HCT116 (cell line): ENCODE measurements at regions of chr2 and their contacts with region 1.

Region 1: DNA sequence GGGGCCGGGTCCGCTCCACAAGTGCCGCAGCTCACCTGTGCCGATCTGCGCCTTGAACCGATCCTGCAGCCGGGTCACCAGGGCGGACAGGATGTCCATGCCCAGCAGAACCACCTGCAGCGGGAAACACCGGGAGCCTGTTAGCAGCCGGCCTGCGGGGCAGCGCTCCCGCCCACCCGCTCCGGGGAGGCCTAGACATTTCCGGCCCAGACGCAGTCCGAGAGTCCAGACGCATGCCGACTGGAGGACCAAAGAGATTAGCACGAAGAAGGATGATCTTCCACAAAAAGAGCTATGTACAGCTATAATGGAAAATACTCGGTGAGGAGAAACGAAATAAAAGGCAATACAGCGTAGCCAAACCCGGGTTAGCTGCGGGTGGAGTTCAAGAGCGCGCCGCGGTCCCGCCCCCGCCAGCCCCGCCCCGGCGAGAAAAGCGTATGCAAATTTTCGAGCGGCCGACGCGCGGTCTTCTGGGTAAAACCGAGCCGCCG is 421 bp upstream of the RNU4ATAC start:
- DNase-seq: peak; percentile 72
- ATAC-seq: peak; percentile 77
- H3K4me3 ChIP-seq: peak overlapping the region; percentile 66 to 70
- H3K27ac ChIP-seq: peak overlapping the region; percentile 77
- H3K4me1 ChIP-seq: peaks cover 15 to 31% of the 10 kb centered on the region in 2 experiments
- H3K27me3 ChIP-seq: no peaks in the 10 kb centered on the region
- CTCF ChIP-seq: no peak
- POLR2A ChIP-seq: no peak
- RAD21 ChIP-seq: no peak

Region 2: GRCh38 chr2:121128754-121129659 is 401.3 kb before region 1 on chr2:
- CTCF ChIA-PET with region 1: interaction called, 8 read pairs
- POLR2A ChIA-PET with region 1: interaction called, 15 read pairs
- RAD21 ChIA-PET with region 1: no interaction called
- intact Hi-C with region 1: no loop called
- DNase-seq: peak; percentile 48
- ATAC-seq: peak; percentile 91
- H3K4me3 ChIP-seq: no peak overlapping the region
- H3K27ac ChIP-seq: no peak overlapping the region
- H3K4me1 ChIP-seq: peaks cover 0 to 5% of the 10 kb centered on the region in 2 experiments; a peak in 3 of 4 replicates
- H3K27me3 ChIP-seq: no peaks in the 10 kb centered on the region; the same call in 1 of the 2 replicates
- CTCF ChIP-seq: peak; percentile 79 to 93 (median 90)
- POLR2A ChIP-seq: no peak
- RAD21 ChIP-seq: peak; percentile 86

Region 3: DNA sequence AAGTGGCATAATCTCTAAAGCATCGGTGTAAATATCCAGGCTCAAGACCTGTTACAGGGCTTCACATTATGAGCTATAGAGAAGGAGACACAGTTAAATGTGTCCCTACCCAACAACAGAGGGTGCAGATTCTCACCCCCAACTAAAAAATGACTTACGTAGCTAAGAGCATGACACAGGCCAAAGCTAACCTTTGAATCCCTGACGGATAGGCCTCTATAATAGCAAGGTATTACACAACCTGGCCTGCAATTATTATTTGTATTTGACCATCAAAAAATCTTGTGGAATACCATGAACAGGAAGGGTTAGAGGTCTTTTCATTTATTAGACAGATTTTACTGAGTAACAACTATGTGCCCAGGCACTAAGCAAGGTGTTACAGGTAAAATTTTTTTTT is 45.5 kb after region 1 on chr2:
- CTCF ChIA-PET with region 1: no interaction called
- POLR2A ChIA-PET with region 1: interaction called, 14 read pairs
- RAD21 ChIA-PET with region 1: no interaction called
- intact Hi-C with region 1: no loop called
- DNase-seq: no peak
- ATAC-seq: no peak
- H3K4me3 ChIP-seq: no peak overlapping the region
- H3K27ac ChIP-seq: no peak overlapping the region
- H3K4me1 ChIP-seq: peaks cover 28 to 30% of the 10 kb centered on the region in 2 experiments
- H3K27me3 ChIP-seq: no peaks in the 10 kb centered on the region
- CTCF ChIP-seq: no peak
- POLR2A ChIP-seq: no peak
- RAD21 ChIP-seq: no peak

Region 4: DNA sequence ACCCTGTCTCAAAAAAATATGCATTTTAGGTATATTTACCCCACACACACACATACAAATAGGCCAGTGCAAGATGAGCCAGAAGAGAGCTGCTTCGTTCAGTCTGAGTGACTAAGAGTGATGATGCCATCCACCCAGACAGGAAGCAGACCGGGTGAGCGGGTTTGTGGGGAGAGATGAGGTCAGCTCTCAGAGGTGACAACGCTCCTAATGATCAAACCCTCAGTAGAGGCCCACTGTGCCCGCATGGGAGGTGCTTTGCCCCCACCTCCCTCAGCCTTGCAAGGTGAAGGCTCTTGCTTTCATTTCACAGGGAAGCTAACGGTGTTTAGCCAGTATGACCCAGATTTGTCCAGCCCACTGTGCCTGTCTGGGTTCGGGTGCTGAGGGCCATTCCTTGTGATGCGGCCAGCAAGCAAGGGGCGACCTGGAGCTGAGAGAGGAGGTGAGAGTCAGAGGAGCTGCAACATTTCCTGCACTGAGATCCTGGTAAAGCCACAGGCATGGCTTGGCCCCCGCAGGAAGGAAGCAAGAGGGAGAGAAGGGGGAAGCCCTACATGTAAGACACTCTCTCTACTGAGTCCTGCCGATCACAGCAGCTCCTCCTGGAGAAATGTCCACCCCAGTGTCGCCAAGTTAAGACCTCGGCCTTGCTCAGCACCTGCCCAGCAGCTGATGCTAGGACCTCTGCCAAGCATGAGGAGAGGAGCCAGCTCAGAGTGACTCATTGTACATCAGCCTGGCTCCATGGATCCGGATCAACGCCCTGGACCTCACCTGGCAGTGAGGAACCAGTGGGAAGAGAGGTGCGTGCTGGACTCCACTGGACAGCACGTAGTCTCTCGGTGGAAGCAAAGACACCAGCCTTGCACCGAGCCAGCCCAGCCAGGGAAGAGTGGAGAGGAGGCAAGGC is 169.4 kb after region 1 on chr2:
- CTCF ChIA-PET with region 1: interaction called, 3 read pairs
- POLR2A ChIA-PET with region 1: interaction called, 38 read pairs
- RAD21 ChIA-PET with region 1: no interaction called
- intact Hi-C with region 1: loop called (anchors 2 kb)
- DNase-seq: peak; percentile 71
- ATAC-seq: peak; percentile 85
- H3K4me3 ChIP-seq: peak overlapping the region; percentile 9 to 51; a peak in 3 of 4 replicates
- H3K27ac ChIP-seq: peak overlapping the region; percentile 7; the same call in 1 of the 2 replicates
- H3K4me1 ChIP-seq: peaks cover 29 to 40% of the 10 kb centered on the region in 2 experiments
- H3K27me3 ChIP-seq: no peaks in the 10 kb centered on the region
- CTCF ChIP-seq: no peak
- POLR2A ChIP-seq: no peak
- RAD21 ChIP-seq: no peak

Region 5: DNA sequence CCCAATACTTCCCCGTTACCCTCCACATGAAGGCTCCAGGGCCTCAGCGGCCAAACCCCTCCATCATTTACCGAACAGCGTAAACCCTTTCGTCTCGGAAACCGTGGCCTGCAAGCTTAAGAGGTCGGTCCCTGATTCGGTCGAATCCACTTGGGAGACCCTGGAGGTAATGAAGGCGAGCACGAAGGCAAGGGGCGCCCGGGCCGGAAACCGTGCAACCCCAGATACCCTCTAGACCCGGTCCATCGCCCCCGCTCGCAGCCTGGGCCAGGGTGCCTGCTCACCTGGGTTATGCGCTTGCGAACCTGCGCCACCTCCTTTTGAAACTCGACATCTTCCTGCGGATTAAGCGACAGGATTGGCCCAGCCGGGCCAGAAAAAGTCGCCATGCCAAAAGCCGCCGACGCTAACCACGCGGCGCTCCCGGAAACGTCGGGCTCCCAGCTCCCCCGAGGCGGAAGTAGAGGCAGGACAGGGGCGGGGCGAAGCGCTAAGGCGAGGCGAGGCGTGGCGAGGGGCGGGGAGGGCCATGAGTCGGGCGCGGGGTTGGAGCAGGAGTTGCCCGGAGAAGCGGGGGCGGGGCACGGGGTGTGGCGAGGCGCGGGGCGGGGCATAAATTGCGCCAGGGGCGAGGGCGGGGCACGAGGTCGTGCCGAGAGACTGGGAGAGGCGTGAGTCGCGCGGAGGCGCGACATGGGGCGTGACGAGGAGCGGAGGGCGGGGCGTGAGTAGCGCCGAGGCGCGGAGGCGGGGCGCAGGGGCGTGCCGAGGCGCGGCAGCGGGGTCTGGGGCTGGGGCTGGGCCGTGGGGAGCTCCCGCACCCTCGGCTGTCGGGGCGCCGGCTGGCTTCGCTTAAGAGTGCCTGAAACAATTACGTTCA is 206.4 kb after region 1 on chr2 and contains the start of gene NIFK:
- CTCF ChIA-PET with region 1: interaction called, 4 read pairs
- POLR2A ChIA-PET with region 1: interaction called, 20 read pairs
- RAD21 ChIA-PET with region 1: no interaction called
- intact Hi-C with region 1: loop called (anchors 1 kb)
- DNase-seq: peak; percentile 93
- ATAC-seq: peak; percentile 94
- H3K4me3 ChIP-seq: peak within 1 kb of the TSS; percentile 97 to 100
- H3K27ac ChIP-seq: peak within 1 kb of the TSS; percentile 70
- H3K4me1 ChIP-seq: peaks cover 8 to 13% of the 10 kb centered on the region in 2 experiments; a peak in 3 of 4 replicates
- H3K27me3 ChIP-seq: no peaks in the 10 kb centered on the region
- CTCF ChIP-seq: no peak
- POLR2A ChIP-seq: peak; percentile 47
- RAD21 ChIP-seq: no peak
- total RNA-seq, gene NIFK: 93.2 TPM

Region 6: DNA sequence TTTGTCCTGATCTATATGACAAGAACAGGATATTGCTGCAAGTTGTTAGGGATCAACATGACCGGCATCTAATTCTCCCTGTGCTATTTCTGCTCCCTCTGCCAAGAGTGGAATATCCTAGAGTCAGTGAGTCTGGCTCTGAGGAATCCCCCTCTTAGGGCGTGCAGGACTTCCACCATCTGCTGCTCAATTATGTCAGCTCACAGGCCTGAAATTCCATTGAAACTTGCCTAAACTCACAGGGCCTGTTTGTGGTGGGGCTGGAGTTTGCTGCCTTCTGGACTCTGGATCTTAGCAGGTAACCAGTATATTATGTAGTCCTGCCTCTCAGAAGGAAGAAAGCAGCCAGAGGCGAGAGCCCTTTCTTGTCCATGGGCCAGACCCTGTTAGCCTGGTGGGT is 548.2 kb after region 1 on chr2:
- CTCF ChIA-PET with region 1: no interaction called
- POLR2A ChIA-PET with region 1: no interaction called
- RAD21 ChIA-PET with region 1: no interaction called
- intact Hi-C with region 1: no loop called
- DNase-seq: no peak
- ATAC-seq: no peak
- H3K4me3 ChIP-seq: no peak overlapping the region
- H3K27ac ChIP-seq: no peak overlapping the region
- H3K4me1 ChIP-seq: no peaks in the 10 kb centered on the region
- H3K27me3 ChIP-seq: peaks cover 29% of the 10 kb centered on the region
- CTCF ChIP-seq: no peak
- POLR2A ChIP-seq: no peak
- RAD21 ChIP-seq: no peak